Right ventricle myocardium inferior (tissue), 1 donor: ENCODE measurements at regions of chr7 and their contacts with region 1.

Region 1: GRCh38 chr7:128791121-128791961 is 427 bp upstream of the CCDC136 start:
- DNase-seq: peak; percentile 90
- ATAC-seq: peak; percentile 90

Region 2: DNA sequence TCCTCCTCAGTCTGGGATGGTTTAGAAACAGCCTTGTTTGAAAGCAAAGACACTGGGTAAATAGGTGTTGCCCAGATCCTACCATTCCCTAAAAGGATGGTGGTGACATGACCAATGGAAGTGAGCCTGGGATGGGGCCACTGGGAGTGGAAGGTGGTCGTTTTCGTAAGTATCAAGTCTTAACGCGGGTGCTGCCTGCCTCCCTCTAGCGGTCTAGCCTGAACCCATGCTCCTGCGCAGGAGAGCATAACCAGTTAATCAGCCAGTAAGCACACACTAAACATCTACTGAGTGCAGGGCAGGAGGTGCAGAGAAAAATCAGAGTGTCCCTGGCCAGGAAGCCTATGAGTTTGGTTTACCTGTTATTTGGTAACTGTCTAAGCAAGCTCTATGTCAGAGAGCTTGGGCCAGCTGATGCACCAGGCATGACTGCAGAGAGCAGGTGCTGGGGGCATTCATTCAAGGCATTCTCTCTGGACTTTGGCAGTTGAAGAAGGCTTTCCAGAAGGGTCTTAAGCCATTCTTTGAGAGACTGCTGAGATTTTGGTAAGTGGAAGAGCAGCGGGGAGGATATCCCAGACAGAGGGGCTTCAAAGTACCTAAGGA is 118.3 kb before region 1 on chr7:
- intact Hi-C with region 1: no loop called
- DNase-seq: no peak
- ATAC-seq: no peak

Region 3: GRCh38 chr7:128739048-128739962 is 52.0 kb before region 1 on chr7 and contains the start of gene CALU:
- intact Hi-C with region 1: loop called (anchors 5 kb)
- DNase-seq: peak; percentile 98
- ATAC-seq: peak; percentile 99
- total RNA-seq, gene CALU: 183 TPM

Region 4: DNA sequence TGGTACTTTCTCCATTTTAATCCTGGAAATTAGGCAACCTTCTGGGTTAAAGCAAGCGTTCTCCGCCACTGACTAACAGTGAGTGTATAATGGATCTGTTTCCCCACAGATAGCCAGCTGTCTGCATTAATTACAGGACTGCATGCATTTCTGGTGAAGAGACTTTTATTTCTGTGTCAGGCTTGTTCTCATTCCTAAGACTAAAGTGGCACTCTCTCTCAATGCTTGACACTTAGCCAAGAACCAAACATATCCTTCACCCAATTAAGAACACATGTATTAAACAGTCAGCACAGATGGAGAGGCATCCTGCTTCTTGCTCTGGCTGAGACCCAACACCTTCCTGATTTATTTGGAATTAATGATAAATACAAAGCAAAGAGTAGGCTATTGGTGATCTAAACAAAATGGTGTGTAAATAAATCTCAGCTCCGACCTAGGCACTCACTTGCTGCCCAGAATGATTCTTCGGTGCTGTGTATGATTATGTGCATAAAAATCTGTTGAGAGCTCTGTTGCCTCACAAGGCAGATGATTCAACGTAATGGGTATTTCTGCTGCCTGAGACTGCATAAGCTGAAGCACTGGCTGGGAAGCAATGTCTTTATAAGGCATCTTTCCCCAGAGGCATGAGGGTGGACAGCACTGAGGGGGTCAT is 35.4 kb before region 1 on chr7:
- intact Hi-C with region 1: no loop called
- DNase-seq: no peak
- ATAC-seq: peak; percentile 35

Region 5: GRCh38 chr7:128830231-128831177 is 39.2 kb after region 1 on chr7 and contains the start of gene FLNC:
- intact Hi-C with region 1: loop called (anchors 2 kb)
- DNase-seq: peak; percentile 80
- ATAC-seq: peak; percentile 24
- total RNA-seq, gene FLNC: 905 TPM

Region 6: GRCh38 chr7:128883622-128884501 is 92.5 kb after region 1 on chr7:
- intact Hi-C with region 1: loop called (anchors 5 kb)
- DNase-seq: peak; percentile 91
- ATAC-seq: peak; percentile 51